ENCODE measurements at regions of chr1 and their contacts with region 1.

Region 1: GRCh38 chr1:23809751-23810171 is 9.2 kb upstream of the GALE start:
- DNase-seq: peak; percentile 91
- ATAC-seq: peak; percentile 98
- H3K4me3 Mint-ChIP-seq: no peak overlapping the region
- H3K27ac Mint-ChIP-seq: peak overlapping the region; percentile 33
- H3K4me1 Mint-ChIP-seq: peaks cover 18% of the 10 kb centered on the region
- H3K27me3 Mint-ChIP-seq: no peaks in the 10 kb centered on the region

Region 2: GRCh38 chr1:23772049-23772853 is 37.5 kb before region 1 on chr1:
- CTCF ChIA-PET with region 1: interaction called, 20 read pairs
- DNase-seq: peak; percentile 93
- ATAC-seq: peak; percentile 95
- H3K4me3 Mint-ChIP-seq: no peak overlapping the region
- H3K27ac Mint-ChIP-seq: no peak overlapping the region
- H3K4me1 Mint-ChIP-seq: peaks cover 35% of the 10 kb centered on the region
- H3K27me3 Mint-ChIP-seq: no peaks in the 10 kb centered on the region

Region 3: DNA sequence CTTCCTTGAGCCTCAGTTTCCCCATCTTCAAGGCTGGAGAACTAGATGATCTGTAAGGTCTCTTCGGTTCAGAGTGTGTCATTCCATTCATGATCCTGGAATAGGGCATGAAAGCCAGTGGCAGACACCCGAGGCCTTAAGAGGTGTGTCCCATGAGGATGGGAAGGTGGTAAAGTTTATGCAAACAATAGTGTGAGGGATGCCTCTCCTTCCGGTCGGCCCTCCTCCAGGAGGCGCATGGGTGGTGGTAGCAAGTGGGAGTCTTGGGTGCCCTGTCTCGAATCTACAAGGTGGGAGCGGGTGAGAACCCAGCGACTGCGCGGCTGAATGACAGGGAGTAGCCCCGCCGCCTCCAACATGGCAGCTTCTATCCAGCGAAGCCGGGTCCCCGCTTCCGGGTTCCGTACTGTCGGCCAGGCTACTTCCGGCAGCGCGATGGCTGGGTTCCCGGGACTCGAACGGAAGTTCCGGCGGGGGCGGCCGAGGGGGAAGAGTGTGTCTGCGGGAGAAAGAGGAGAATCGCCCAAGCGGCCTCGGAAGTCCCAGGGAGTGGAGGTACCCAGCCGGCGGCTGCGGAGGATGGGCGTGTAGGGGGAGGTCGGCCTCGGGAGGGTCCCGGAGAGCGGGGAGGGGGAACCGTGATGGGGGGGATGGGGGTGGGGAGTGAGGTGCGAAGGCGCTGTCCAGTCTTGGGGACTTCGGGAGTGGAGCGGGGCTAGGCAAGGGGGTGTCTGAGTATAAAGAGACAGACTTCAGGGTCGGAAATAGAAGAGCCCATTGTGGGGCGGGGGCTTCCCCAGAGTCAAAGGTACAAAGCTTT is 18.9 kb before region 1 on chr1 and contains the start of gene LYPLA2:
- CTCF ChIA-PET with region 1: interaction called, 11 read pairs
- DNase-seq: peak; percentile 93
- ATAC-seq: peak; percentile 95
- H3K4me3 Mint-ChIP-seq: peak within 1 kb of the TSS; percentile 94
- H3K27ac Mint-ChIP-seq: peak within 1 kb of the TSS; percentile 90
- H3K4me1 Mint-ChIP-seq: peaks cover 17% of the 10 kb centered on the region
- H3K27me3 Mint-ChIP-seq: no peaks in the 10 kb centered on the region
- total RNA-seq, gene LYPLA2: 75.7 to 87.2 TPM

Region 4: DNA sequence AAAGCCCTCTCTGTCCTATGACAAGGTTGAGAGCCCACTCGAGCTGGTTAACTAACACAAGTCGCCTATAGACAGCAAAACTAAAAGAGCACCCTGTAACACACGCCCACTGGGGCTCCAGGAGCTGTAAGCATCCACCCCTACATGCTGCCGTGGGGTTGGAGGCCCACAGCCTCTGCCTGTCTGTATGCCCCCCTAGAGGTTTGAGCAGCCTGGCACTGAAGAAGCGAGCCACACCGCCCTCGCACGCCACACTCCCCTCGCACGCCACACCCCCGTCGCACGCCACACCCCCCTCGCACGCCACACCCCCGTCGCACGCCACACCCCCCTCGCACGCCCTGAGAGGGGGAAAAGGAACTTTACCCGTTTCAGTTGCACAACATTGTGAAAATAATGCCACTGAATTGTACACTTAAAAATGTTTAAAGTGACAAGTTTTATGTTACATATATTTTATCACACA is 28.7 kb after region 1 on chr1:
- CTCF ChIA-PET with region 1: interaction called, 13 read pairs
- DNase-seq: peak; percentile 80
- ATAC-seq: peak; percentile 100
- H3K4me3 Mint-ChIP-seq: peak overlapping the region; percentile 66
- H3K27ac Mint-ChIP-seq: no peak overlapping the region
- H3K4me1 Mint-ChIP-seq: peaks cover 15% of the 10 kb centered on the region
- H3K27me3 Mint-ChIP-seq: peaks cover 15% of the 10 kb centered on the region

Region 5: GRCh38 chr1:23867953-23868556 is 58.3 kb after region 1 on chr1 and contains the start of gene FUCA1:
- CTCF ChIA-PET with region 1: interaction called, 37 read pairs
- DNase-seq: peak; percentile 95
- ATAC-seq: peak; percentile 100
- H3K4me3 Mint-ChIP-seq: peak within 1 kb of the TSS; percentile 74
- H3K27ac Mint-ChIP-seq: peak within 1 kb of the TSS; percentile 79
- H3K4me1 Mint-ChIP-seq: peaks cover 36% of the 10 kb centered on the region
- H3K27me3 Mint-ChIP-seq: peaks cover 21% of the 10 kb centered on the region
- total RNA-seq, gene FUCA1: 5.6 to 6.5 TPM

Region 6: DNA sequence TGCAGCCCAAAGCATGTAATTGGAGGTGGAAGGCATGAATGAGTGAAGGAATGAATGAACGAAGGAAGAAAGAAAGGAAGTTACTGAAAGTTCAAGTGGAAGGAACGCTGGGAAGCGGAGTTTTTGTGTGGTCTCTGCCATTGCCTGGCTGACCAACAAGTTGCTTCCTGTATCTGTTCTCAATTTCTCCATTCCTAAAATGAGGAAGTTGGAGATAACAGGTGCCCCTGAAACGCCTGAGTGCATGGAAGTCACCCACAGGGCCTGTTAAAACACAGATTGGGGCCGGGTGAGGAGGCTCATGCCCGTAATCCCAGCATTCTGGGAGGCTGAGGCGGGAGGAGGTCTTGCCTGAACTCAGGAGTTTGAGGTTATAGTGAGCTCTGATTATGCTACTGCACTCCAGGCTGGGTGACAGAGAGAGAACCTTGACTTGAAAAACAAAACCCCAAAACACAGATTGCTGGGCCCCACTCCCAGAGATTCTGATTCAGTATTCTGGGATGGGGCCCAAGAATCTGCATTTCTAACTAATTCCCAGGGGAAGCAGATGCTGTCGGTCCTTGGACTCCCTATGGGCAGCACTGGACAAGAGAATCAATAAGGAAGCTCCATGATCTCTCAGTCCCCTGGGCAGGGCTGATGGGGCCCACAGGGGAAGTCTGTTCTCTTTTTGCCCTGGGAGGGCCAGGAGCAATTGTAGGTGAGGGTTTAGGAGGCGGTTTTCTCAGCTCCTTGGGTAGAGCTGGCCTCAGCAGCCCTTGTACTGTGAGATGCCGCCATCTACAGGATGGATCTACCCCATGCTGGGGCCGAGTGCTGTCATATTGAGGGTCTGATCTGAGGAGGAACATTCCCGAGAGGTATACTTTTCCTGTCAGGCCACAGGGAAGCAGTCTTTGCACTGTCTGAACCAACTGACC is 106.7 kb after region 1 on chr1:
- CTCF ChIA-PET with region 1: interaction called, 52 read pairs
- DNase-seq: peak; percentile 79
- ATAC-seq: peak; percentile 96
- H3K4me3 Mint-ChIP-seq: no peak overlapping the region
- H3K27ac Mint-ChIP-seq: no peak overlapping the region
- H3K4me1 Mint-ChIP-seq: peaks cover 23% of the 10 kb centered on the region
- H3K27me3 Mint-ChIP-seq: peaks cover 8% of the 10 kb centered on the region

Measured in activated CD8-positive, alpha-beta memory T cell treated with anti-CD3 and anti-CD28 coated beads, Interleukin-2, amount 10 ng/mL, durations not matched to agents 7 days and 5 days (primary cell).